ENCODE measurements at regions of chr3 and their contacts with region 1.

Region 1: GRCh38 chr3:17782751-17783150 is 40.3 kb upstream of the TBC1D5 start:
- DNase-seq: no peak
- H3K4me3 ChIP-seq: no peak overlapping the region
- H3K27ac ChIP-seq: no peak overlapping the region
- H3K4me1 ChIP-seq: no peaks in the 10 kb centered on the region
- H3K27me3 ChIP-seq: no peaks in the 10 kb centered on the region
- CTCF ChIP-seq: no peak
- EP300 ChIP-seq: no peak
- POLR2A ChIP-seq: no peak
- RAD21 ChIP-seq: no peak

Region 2: GRCh38 chr3:17802821-17803392 is 20.2 kb after region 1 on chr3:
- CTCF ChIA-PET with region 1: interaction called, 10 read pairs
- POLR2A ChIA-PET with region 1: no interaction called
- DNase-seq: no peak
- H3K4me3 ChIP-seq: no peak overlapping the region
- H3K27ac ChIP-seq: no peak overlapping the region
- H3K4me1 ChIP-seq: no peaks in the 10 kb centered on the region
- H3K27me3 ChIP-seq: no peaks in the 10 kb centered on the region
- CTCF ChIP-seq: no peak
- EP300 ChIP-seq: no peak
- POLR2A ChIP-seq: no peak
- RAD21 ChIP-seq: peak; percentile 12 to 15; a peak in 1 of 4 replicates

Region 3: GRCh38 chr3:17942856-17943255 is 160.1 kb after region 1 on chr3:
- CTCF ChIA-PET with region 1: no interaction called
- POLR2A ChIA-PET with region 1: no interaction called
- DNase-seq: no peak
- H3K4me3 ChIP-seq: no peak overlapping the region
- H3K27ac ChIP-seq: no peak overlapping the region
- H3K4me1 ChIP-seq: peaks cover 0 to 6% (median 1%) of the 10 kb centered on the region in 4 experiments; a peak in 1 of 7 replicates
- H3K27me3 ChIP-seq: no peaks in the 10 kb centered on the region
- CTCF ChIP-seq: no peak
- EP300 ChIP-seq: no peak
- POLR2A ChIP-seq: no peak
- RAD21 ChIP-seq: no peak

Measured in H1 (cell line).